ENCODE measurements at regions of chr7 and their contacts with region 1.

Region 1: DNA sequence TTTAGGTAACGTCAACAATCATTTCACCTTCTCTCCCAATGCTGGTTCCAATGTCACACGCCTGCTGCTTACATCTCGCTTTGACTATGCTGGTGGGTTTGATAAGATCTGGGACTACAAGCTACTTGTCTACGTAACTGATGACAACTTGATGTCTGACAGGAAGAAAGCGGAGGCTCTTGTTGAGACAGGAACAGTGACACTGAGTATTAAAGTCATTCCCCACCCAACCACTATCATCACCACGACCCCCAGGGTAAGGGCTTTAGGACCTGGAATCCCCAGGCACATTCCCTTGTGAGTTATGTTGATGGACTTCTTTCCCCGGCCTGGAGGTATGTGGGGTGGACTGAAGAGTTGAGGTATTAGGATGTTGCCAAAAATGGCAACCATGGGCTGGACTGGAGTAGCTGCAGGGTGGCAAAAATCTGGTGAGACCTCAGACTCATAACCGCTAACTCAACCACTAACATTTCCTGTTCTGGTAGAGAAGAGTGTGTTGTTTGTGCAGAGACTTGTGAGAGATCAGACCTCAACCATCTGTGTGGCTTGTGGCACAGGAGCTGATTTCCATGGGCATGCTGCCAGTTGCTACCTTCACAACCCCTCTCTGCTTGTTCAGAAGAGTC is 59.2 kb downstream of the CDHR3 start:
- DNase-seq: peak; percentile 89 to 92 (median 91)
- H3K4me3 ChIP-seq: peak overlapping the region in 1 of 2 donors; percentile 48
- H3K4me3 Mint-ChIP-seq: peak overlapping the region; percentile 5 to 82 (median 72)
- H3K27ac ChIP-seq: peak overlapping the region; percentile 48
- H3K27ac Mint-ChIP-seq: peak overlapping the region; percentile 88 to 99 (median 98)
- H3K4me1 ChIP-seq: peaks cover 52% of the 10 kb centered on the region
- H3K4me1 Mint-ChIP-seq: peaks cover 38 to 70% (median 48%) of the 10 kb centered on the region in 4 donors
- H3K27me3 ChIP-seq: no peaks in the 10 kb centered on the region
- H3K27me3 Mint-ChIP-seq: no peaks in the 10 kb centered on the region

Region 2: DNA sequence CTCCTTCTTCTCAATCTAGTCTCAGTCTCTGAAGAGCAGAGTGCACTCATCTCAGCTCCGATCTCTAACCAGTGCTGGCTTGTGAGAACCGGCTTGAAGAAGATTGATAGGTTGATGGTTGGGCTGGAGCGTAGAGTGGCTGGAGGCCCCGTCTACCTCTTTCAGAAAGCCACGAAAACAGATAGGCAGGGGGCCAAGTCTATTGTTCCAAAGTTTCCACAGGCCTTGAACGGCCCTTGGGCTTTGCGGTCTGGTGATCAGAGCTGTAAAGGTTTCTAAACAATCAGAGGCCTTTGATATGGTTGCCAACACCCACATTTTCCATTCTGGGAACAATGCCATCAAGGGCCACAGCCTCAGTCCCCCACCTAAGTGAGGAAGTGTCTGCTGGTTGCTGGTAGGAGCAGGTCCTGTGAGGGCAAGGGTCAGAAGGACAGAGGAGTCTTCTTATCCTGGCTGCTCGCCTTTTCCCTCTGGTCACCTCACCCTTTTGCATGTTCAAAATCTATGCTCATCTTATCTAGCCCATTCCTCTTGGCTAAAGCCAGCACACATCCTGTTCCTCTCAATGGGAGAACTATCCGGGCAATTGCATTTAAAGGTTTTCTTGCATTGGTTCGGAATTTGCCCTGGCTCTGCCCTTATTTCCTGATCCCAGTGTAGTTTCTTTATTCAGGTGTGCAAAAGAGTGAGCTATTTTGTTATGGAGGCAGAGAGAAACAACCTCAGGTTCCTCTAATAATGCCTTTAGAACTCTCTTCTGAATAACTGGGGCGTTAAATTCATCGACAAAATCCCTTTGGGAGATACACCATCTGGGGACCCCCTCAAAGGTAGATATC is 1078.6 kb before region 1 on chr7:
- CTCF ChIA-PET with region 1: no interaction called
- POLR2A ChIA-PET with region 1: no interaction called
- intact Hi-C with region 1: loop called (anchors 1 kb)
- DNase-seq: peak; percentile 75 to 92 (median 81)
- H3K4me3 ChIP-seq: peak overlapping the region; percentile 1 to 15
- H3K4me3 Mint-ChIP-seq: peak overlapping the region; percentile 82 to 92 (median 88)
- H3K27ac ChIP-seq: peak overlapping the region; percentile 94
- H3K27ac Mint-ChIP-seq: peak overlapping the region; percentile 100
- H3K4me1 ChIP-seq: peaks cover 59% of the 10 kb centered on the region
- H3K4me1 Mint-ChIP-seq: peaks cover 45 to 71% (median 58%) of the 10 kb centered on the region in 4 donors
- H3K27me3 ChIP-seq: no peaks in the 10 kb centered on the region
- H3K27me3 Mint-ChIP-seq: peaks cover 0 to 1% of the 10 kb centered on the region in 2 donors

Region 3: GRCh38 chr7:105849122-105849855 is 173.0 kb before region 1 on chr7:
- CTCF ChIA-PET with region 1: interaction called, 3 read pairs
- POLR2A ChIA-PET with region 1: interaction called, 30 read pairs
- intact Hi-C with region 1: no loop called
- DNase-seq: peak; percentile 63 to 81 (median 71)
- H3K4me3 ChIP-seq: peak overlapping the region; percentile 16 to 18
- H3K4me3 Mint-ChIP-seq: peak overlapping the region; percentile 60 to 87 (median 78)
- H3K27ac ChIP-seq: peak overlapping the region; percentile 35
- H3K27ac Mint-ChIP-seq: peak overlapping the region; percentile 74 to 96 (median 94)
- H3K4me1 ChIP-seq: peaks cover 58% of the 10 kb centered on the region
- H3K4me1 Mint-ChIP-seq: peaks cover 56 to 65% (median 58%) of the 10 kb centered on the region in 4 donors
- H3K27me3 ChIP-seq: no peaks in the 10 kb centered on the region
- H3K27me3 Mint-ChIP-seq: no peaks in the 10 kb centered on the region

Region 4: DNA sequence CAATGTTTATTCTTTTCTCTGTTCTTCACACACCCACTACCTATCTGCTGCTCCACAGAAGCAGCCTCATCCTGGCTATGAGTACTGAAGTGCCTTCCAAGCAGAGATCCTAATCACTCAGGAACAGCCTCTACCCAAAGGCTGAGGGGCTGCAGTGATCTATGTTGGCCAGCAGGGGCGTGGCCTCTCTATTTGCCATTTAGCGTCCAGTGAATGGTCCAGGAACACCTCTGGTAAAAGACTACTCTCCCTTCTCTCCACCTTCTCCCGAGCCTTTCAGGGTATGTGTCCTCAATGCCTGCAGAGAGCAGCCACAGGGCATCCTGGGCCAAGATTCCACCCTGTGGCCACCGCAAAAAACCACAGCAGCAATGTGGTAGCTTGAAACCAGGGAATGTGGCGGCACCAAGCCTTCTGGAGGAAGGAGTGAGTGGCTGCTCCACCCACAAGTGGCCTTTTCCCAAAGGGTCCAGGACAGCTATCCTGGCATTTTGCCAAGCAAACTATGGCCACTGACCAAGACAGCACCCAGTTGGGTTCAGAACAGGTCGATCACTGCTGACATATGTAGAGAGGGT is 18.9 kb after region 1 on chr7:
- CTCF ChIA-PET with region 1: interaction called, 109 read pairs
- POLR2A ChIA-PET with region 1: interaction called, 14 read pairs
- intact Hi-C with region 1: loop called (anchors 1 kb)
- DNase-seq: peak in 2 of 5 donors; percentile 19 to 30
- H3K4me3 ChIP-seq: no peak overlapping the region
- H3K4me3 Mint-ChIP-seq: peak overlapping the region in 2 of 8 donors; percentile 6 to 59
- H3K27ac ChIP-seq: no peak overlapping the region
- H3K27ac Mint-ChIP-seq: peak overlapping the region in 4 of 7 donors; percentile 0 to 74 (median 30)
- H3K4me1 ChIP-seq: peaks cover 26% of the 10 kb centered on the region
- H3K4me1 Mint-ChIP-seq: peaks cover 15 to 32% (median 25%) of the 10 kb centered on the region in 4 donors
- H3K27me3 ChIP-seq: no peaks in the 10 kb centered on the region
- H3K27me3 Mint-ChIP-seq: peaks cover 2 to 6% of the 10 kb centered on the region in 2 donors

Region 5: DNA sequence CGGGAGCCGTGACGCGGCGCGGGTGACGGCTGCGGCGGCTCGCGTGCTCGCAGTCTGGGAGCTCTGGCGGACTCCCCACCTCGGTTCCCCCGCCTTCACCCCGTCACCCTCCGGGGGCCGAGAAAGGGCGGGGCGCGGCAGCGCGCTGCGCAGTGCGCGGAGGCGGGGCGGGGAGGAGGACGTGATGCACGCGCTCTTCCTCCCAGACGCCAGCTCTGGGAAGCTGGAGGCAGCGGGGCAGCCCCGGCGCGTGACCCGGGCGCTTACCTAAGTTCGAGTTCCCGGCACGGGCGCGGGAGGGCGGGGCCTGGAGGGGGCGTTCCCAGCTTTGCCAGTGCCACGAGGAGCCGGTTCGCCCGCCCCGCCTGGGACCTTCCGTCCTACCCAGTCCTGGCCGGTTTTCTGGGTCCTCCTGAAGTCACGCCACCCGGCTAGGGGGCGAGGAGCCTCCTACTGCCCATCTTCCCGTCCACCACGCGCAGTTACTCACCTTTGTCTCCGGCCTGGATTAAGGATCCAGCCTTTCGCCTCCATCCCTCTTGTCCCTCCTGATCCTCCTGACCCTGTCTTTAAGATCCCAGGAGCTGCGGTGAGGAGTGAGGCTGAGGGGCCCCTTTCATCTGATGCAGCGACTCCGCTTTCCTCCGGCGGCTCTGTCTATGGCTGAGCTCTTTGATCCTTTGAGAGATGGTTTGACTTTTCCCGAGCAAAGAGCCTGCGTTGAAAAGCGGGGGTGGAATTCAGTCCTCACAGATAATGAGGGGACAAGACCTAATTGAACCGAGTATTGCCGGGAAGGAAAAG is 262.9 kb after region 1 on chr7:
- CTCF ChIA-PET with region 1: no interaction called
- POLR2A ChIA-PET with region 1: no interaction called
- intact Hi-C with region 1: loop called (anchors 1 kb)
- DNase-seq: peak; percentile 93 to 99 (median 97)
- H3K4me3 ChIP-seq: peak overlapping the region; percentile 86 to 97
- H3K4me3 Mint-ChIP-seq: peak overlapping the region; percentile 95 to 98 (median 96)
- H3K27ac ChIP-seq: peak overlapping the region; percentile 95
- H3K27ac Mint-ChIP-seq: peak overlapping the region; percentile 93 to 99 (median 98)
- H3K4me1 ChIP-seq: peaks cover 29% of the 10 kb centered on the region
- H3K4me1 Mint-ChIP-seq: peaks cover 14 to 28% (median 21%) of the 10 kb centered on the region in 4 donors
- H3K27me3 ChIP-seq: no peaks in the 10 kb centered on the region
- H3K27me3 Mint-ChIP-seq: no peaks in the 10 kb centered on the region

Region 6: DNA sequence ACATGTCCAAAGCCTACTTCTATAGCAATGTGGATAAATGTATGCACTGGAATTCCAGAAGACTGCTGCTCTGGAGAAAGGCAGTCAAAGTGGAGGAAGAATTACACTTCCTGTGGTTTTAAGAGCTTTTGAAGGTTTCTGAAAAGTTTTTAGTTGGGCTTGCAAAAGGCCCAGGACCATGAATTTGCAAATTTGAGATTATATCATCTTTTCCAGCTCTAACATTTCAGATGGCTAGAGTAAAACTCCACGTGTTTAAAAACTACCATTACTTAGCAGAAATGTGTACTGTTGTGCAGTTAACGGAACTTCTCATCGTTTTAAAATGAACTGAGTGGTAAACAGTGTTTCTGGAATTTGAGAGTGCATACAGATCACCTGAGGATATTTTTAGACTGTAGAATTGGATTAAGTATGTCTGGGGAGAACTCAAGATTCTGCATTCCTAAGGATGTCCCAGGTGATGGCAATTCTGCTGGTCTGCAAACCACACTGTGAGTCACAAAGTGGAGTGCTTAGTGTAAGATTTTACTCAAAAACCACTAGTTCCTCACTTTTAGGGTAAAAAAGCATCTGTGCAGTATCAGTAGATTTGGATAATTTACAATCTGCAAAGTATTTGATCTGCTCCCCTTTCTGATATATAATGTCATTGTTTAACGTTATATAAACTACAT is 671.5 kb after region 1 on chr7:
- CTCF ChIA-PET with region 1: no interaction called
- POLR2A ChIA-PET with region 1: no interaction called
- intact Hi-C with region 1: no loop called
- DNase-seq: no peak
- H3K4me3 ChIP-seq: no peak overlapping the region
- H3K4me3 Mint-ChIP-seq: no peak overlapping the region
- H3K27ac ChIP-seq: no peak overlapping the region
- H3K27ac Mint-ChIP-seq: no peak overlapping the region
- H3K4me1 ChIP-seq: peaks cover 7% of the 10 kb centered on the region
- H3K4me1 Mint-ChIP-seq: peaks cover 0 to 5% (median 4%) of the 10 kb centered on the region in 4 donors
- H3K27me3 ChIP-seq: no peaks in the 10 kb centered on the region
- H3K27me3 Mint-ChIP-seq: no peaks in the 10 kb centered on the region